ENCODE measurements at regions of chr6 and their contacts with region 1.

Region 1: DNA sequence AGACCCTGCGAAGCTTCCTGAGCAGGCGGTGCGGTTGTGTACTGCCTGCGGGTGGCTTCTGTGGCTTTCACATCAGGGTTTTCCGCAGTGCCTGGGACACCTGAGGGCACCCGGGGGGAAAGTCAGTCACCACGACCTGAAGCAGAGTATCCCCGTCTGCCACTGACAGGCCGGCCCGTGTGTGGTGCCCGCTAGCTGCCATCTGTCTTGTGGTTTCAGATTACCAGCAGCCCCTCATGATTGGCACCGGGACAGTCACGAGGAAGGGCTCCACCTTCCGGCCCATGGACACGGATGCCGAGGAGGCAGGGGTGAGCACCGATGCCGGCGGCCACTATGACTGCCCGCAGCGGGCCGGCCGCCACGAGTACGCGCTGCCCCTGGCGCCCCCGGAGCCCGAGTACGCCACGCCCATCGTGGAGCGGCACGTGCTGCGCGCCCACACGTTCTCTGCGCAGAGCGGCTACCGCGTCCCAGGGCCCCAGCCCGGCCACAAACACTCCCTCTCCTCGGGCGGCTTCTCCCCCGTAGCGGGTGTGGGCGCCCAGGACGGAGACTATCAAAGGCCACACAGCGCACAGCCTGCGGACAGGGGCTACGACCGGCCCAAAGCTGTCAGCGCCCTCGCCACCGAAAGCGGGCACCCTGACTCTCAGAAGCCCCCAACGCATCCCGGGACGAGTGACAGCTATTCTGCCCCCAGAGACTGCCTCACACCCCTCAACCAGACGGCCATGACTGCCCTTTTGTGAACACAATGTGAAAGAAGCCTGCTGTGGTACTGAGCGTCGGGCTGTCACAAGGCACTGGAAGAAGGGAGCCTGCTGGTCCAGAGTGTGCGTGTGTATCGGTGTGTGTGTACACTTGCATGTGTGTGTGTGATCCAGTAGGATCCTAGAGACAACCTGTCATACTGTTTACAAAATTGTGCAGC is 54.4 kb downstream of the GOPC start:
- DNase-seq: peak; percentile 64
- ATAC-seq: peak; percentile 55
- H3K4me3 Mint-ChIP-seq: peak overlapping the region; percentile 72
- H3K27ac Mint-ChIP-seq: peak overlapping the region; percentile 79
- H3K4me1 Mint-ChIP-seq: peaks cover 39% of the 10 kb centered on the region
- H3K27me3 Mint-ChIP-seq: no peaks in the 10 kb centered on the region

Region 2: DNA sequence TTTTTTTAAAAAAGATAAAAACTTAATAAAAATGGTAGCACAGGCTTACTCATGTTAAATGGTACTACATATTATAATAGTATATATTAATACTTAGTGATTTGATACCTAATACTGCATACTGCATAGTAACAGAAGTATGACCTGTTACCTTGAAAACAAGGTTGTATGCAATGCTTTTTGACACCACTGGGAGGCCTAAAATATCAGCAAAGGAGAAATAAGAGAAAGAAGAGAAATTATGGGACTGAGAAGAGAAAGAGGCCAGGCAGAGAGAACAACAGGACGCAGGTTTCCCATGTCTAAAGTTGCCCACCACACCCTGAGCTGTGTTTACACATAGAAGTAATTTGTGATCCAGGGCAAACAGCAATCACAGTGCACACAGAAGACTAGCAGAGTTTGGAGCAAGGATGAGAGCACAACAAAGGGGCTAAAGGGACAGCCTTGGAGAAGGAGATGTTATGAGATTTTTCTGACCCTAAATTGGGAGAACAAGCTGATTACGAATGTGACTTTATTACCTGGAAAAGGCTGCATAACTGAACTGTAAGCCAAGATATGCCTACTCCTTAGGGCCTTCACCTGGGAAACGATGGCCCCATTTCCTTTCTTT is 195.4 kb before region 1 on chr6:
- CTCF ChIA-PET with region 1: no interaction called
- DNase-seq: no peak
- ATAC-seq: no peak
- H3K4me3 Mint-ChIP-seq: no peak overlapping the region
- H3K27ac Mint-ChIP-seq: no peak overlapping the region
- H3K4me1 Mint-ChIP-seq: no peaks in the 10 kb centered on the region
- H3K27me3 Mint-ChIP-seq: peaks cover 4% of the 10 kb centered on the region

Region 3: DNA sequence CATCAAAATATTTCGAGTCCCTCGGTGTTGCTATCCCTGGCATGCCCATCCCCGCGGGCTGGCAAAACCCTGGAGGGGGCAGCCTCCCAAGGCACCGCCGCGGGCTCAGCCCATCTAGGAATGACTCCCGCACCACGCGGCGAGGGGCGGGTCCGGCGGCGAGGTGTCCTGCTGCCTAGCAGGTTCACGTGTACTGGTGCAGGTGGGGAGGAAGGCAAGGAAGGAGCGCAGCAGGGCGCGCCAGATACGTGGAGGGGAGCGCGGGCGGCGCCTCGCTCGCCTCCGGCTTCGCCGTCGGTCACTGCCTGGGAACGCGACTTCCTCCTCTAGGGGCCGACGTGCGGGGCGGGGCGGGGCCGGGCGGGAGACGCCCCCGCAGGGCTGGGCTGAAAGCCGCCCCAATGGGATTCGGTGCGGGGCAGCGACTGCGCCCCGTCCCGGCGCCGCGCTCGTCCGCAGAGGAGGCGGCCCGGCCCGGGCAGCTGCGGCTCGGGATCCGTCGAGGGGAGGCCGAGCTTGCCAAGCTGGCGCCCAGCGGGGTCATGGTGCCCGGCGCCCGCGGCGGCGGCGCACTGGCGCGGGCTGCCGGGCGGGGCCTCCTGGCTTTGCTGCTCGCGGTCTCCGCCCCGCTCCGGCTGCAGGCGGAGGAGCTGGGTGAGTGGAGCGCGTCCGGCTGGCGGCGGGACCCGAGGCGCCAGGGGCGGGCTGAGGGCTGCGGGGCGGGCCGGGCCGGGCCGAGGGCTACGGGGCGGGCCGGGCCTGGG is 65.5 kb before region 1 on chr6 and contains the start of gene DCBLD1:
- CTCF ChIA-PET with region 1: interaction called, 70 read pairs
- DNase-seq: peak; percentile 76
- ATAC-seq: peak; percentile 87
- H3K4me3 Mint-ChIP-seq: peak within 1 kb of the TSS; percentile 81
- H3K27ac Mint-ChIP-seq: peak within 1 kb of the TSS; percentile 68
- H3K4me1 Mint-ChIP-seq: peaks cover 16% of the 10 kb centered on the region
- H3K27me3 Mint-ChIP-seq: peaks cover 41% of the 10 kb centered on the region
- total RNA-seq, gene DCBLD1: 5.8 to 6.1 TPM

Region 4: GRCh38 chr6:117602151-117602898 is 54.4 kb after region 1 on chr6 and contains the start of gene GOPC:
- CTCF ChIA-PET with region 1: interaction called, 16 read pairs
- DNase-seq: peak; percentile 97
- ATAC-seq: peak; percentile 97
- H3K4me3 Mint-ChIP-seq: peak within 1 kb of the TSS; percentile 97
- H3K27ac Mint-ChIP-seq: peak within 1 kb of the TSS; percentile 98
- H3K4me1 Mint-ChIP-seq: peaks cover 36% of the 10 kb centered on the region
- H3K27me3 Mint-ChIP-seq: peaks cover 2% of the 10 kb centered on the region
- total RNA-seq, gene GOPC: 21.3 to 25.0 TPM